Endothelial cell of umbilical vein (primary cell): ENCODE measurements at regions of chr4 and their contacts with region 1.

Region 1: GRCh38 chr4:10554694-10555093 is 97.5 kb upstream of the ZNF518B start:
- DNase-seq: peak; percentile 67
- H3K4me3 ChIP-seq: no peak overlapping the region
- H3K27ac ChIP-seq: no peak overlapping the region
- H3K4me1 ChIP-seq: peaks cover 4% of the 10 kb centered on the region
- H3K27me3 ChIP-seq: peaks cover 9 to 14% of the 10 kb centered on the region in 2 experiments
- CTCF ChIP-seq: peak; percentile 65 to 72
- POLR2A ChIP-seq: no peak

Region 2: DNA sequence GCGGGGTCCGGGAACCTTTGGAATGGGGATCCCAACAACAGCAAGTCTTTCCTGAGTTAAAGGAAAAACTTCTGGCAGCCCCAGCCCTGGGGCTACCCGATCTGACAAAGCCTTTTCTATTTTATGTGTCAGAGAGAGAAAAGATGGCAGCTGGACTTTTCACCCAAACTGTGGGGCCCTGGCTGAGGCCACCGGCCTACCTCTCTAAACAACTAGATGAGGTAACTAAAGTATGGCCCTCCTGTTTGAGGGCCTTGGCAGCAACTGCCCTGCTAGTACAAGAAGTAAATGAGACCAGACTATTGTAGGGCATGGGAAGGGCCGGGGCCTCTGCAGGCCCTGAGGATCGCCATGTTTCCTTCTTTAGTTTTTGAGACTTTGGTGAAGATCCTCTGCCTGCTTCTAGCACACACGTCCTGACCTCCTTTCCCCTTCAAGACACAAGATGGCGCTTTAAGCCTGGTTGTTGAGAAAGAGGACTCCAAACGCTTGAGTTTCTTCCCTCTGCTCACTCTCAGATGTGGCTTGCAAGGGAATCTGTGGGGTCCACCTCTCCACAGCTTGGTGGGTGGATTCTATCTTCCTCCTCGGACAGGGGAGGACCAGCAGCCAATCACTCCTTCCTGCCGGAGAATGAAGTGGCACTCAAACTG is 791.7 kb before region 1 on chr4:
- CTCF ChIA-PET with region 1: no interaction called
- POLR2A ChIA-PET with region 1: no interaction called
- dilution Hi-C with region 1: no loop called
- intact Hi-C with region 1: loop called (anchors 5 kb)
- DNase-seq: peak; percentile 56
- H3K4me3 ChIP-seq: no peak overlapping the region
- H3K27ac ChIP-seq: no peak overlapping the region
- H3K4me1 ChIP-seq: no peaks in the 10 kb centered on the region
- H3K27me3 ChIP-seq: no peaks in the 10 kb centered on the region
- CTCF ChIP-seq: peak; percentile 41 to 60
- POLR2A ChIP-seq: no peak

Region 3: GRCh38 chr4:10164877-10165283 is 389.8 kb before region 1 on chr4:
- CTCF ChIA-PET with region 1: interaction called, 136 read pairs
- POLR2A ChIA-PET with region 1: no interaction called
- dilution Hi-C with region 1: loop called (anchors 25 kb)
- intact Hi-C with region 1: loop called (anchors 1 kb)
- DNase-seq: peak; percentile 73
- H3K4me3 ChIP-seq: no peak overlapping the region
- H3K27ac ChIP-seq: no peak overlapping the region
- H3K4me1 ChIP-seq: no peaks in the 10 kb centered on the region
- H3K27me3 ChIP-seq: no peaks in the 10 kb centered on the region
- CTCF ChIP-seq: peak; percentile 65 to 74
- POLR2A ChIP-seq: no peak

Region 4: GRCh38 chr4:10535912-10536311 is 18.8 kb before region 1 on chr4:
- CTCF ChIA-PET with region 1: interaction called, 18 read pairs
- POLR2A ChIA-PET with region 1: no interaction called
- dilution Hi-C with region 1: no loop called
- intact Hi-C with region 1: no loop called
- DNase-seq: no peak
- H3K4me3 ChIP-seq: no peak overlapping the region
- H3K27ac ChIP-seq: no peak overlapping the region
- H3K4me1 ChIP-seq: peaks cover 3% of the 10 kb centered on the region
- H3K27me3 ChIP-seq: peaks cover 0 to 2% of the 10 kb centered on the region in 2 experiments
- CTCF ChIP-seq: no peak
- POLR2A ChIP-seq: no peak

Region 5: GRCh38 chr4:11424000-11424399 is 869.3 kb after region 1 on chr4:
- CTCF ChIA-PET with region 1: interaction called, 21 read pairs
- POLR2A ChIA-PET with region 1: no interaction called
- dilution Hi-C with region 1: no loop called
- intact Hi-C with region 1: loop called (anchors 1 kb)
- DNase-seq: peak; percentile 38
- H3K4me3 ChIP-seq: no peak overlapping the region
- H3K27ac ChIP-seq: no peak overlapping the region
- H3K4me1 ChIP-seq: peaks cover 16% of the 10 kb centered on the region
- H3K27me3 ChIP-seq: peaks cover 10 to 13% of the 10 kb centered on the region in 2 experiments
- CTCF ChIP-seq: peak; percentile 33 to 41
- POLR2A ChIP-seq: no peak

Region 6: DNA sequence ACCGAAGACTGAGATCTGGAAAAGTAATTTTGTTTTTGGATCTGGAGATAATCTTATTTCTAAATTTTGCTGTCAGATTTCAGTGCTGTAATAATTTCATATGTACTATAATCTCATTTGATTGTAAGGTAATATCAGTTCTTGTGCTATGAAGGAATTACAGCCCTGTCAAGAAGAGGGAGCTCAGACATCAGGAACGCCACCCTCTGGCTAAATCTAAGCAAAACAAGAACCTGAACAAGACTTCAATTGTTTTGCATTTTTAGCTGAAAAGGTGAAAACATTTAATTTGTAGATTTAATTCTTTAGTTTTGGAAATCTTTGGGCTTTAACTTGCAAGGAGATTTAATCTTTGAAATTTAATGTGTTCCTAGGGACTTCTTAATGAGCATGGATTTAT is 1399.4 kb after region 1 on chr4:
- CTCF ChIA-PET with region 1: no interaction called
- POLR2A ChIA-PET with region 1: no interaction called
- dilution Hi-C with region 1: no loop called
- intact Hi-C with region 1: loop called (anchors 10 kb)
- DNase-seq: peak; percentile 79
- H3K4me3 ChIP-seq: no peak overlapping the region
- H3K27ac ChIP-seq: no peak overlapping the region
- H3K4me1 ChIP-seq: no peaks in the 10 kb centered on the region
- H3K27me3 ChIP-seq: no peaks in the 10 kb centered on the region
- CTCF ChIP-seq: peak; percentile 32 to 50
- POLR2A ChIP-seq: no peak